ENCODE measurements at regions of chr17 and their contacts with region 1.

Region 1: GRCh38 chr17:1573916-1574696 is 11.5 kb upstream of the PITPNA start:
- DNase-seq: peak; percentile 84 to 95 (median 94)
- H3K4me3 ChIP-seq: no peak overlapping the region
- H3K27ac ChIP-seq: peak overlapping the region; percentile 54 to 76
- H3K4me1 ChIP-seq: peaks cover 19% of the 10 kb centered on the region
- H3K27me3 ChIP-seq: no peaks in the 10 kb centered on the region
- CTCF ChIP-seq: peak; percentile 92 to 99 (median 97)
- EP300 ChIP-seq: no peak
- POLR2A ChIP-seq: no peak

Region 2: GRCh38 chr17:1122533-1123392 is 451.3 kb before region 1 on chr17:
- intact Hi-C with region 1: no loop called
- DNase-seq: peak; percentile 84 to 93 (median 91)
- H3K4me3 ChIP-seq: no peak overlapping the region
- H3K27ac ChIP-seq: peak overlapping the region in 1 of 2 donors; percentile 47
- H3K4me1 ChIP-seq: peaks cover 9% of the 10 kb centered on the region
- H3K27me3 ChIP-seq: no peaks in the 10 kb centered on the region
- CTCF ChIP-seq: peak; percentile 92 to 94 (median 93)
- EP300 ChIP-seq: no peak
- POLR2A ChIP-seq: no peak

Region 3: DNA sequence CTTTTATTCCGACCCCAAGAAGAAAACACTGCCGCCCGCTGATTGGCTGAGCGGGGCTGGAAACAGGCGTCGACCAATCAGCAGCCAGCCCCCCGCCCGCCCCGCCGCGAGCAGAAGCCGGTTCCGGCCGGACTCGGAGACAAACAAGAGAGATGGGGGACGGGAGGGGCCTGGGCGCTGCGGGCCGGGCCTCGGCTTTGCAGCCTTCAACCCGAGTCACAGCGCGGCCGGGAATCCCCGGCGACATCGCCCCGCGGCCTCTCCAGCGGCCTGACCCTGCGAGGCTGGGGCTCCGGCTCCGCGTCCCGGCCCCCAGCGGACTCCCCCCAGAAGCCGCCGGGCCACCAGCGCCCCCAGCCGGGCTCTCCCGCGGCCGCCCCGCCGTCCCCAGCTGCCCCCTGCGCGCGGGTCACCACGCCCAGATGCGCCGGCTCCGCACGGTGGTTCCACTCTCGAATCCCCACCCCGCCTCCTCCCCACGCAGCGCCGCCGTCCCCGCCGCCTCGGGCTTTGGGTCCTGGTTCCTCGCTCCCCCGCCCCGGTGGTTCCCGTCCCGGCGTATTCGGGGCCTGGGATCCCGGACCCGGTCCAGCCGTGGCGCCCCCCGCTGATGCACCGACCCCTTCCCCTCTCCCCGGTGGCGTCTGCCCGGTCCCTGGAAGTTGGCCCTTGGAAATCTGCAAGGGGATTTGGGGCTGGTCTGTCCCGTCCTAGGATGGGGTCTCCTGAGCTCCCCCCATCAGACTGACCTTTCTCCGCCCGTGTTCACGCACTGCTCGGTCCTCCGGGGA is 54.9 kb after region 1 on chr17:
- intact Hi-C with region 1: loop called in 2 of 4 experiments (anchors 2 kb)
- DNase-seq: peak; percentile 91 to 95 (median 93)
- H3K4me3 ChIP-seq: peak overlapping the region; percentile 54
- H3K27ac ChIP-seq: peak overlapping the region; percentile 47 to 81
- H3K4me1 ChIP-seq: peaks cover 3% of the 10 kb centered on the region
- H3K27me3 ChIP-seq: no peaks in the 10 kb centered on the region
- CTCF ChIP-seq: peak; percentile 10 to 55 (median 54)
- EP300 ChIP-seq: no peak
- POLR2A ChIP-seq: peak; percentile 49

Region 4: DNA sequence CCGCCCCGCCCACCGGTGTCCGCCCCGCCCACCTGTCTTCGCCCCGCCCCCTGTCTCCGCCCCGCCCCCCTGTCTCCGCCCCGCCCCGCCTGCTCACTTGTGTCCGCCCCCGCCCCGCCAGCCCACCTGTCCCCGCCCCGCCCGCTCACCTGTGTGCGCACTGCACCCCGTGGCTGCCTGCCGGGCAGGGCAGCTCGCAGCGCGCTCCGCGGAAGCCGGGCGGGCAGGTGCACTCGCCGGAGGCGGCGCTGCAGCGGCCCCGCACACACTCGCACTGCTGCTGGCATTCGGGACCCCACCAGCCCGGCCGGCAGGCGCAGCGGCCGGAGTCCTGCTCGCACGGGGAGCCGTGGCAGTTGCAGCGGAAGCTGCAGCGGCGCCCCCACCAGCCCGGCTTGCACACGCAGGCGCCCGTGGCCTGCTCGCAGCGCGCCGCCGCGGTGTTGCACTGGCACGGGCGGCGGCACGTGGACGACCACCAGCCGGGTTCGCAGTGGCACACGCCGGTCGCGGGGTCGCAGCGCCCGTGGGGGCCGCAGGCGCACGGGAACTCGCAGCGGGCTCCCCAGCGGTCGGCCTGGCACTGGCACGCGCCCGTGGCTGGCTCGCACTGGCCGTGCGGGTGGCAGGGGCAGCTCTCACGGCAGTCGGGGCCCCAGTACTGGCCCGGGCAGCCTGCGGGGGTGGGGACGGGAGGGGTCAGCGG is 69.3 kb after region 1 on chr17:
- intact Hi-C with region 1: loop called (anchors 1 to 5 kb)
- DNase-seq: peak in 2 of 5 donors; percentile 56 to 68
- H3K4me3 ChIP-seq: peak overlapping the region; percentile 24
- H3K27ac ChIP-seq: no peak overlapping the region
- H3K4me1 ChIP-seq: peaks cover 5% of the 10 kb centered on the region
- H3K27me3 ChIP-seq: no peaks in the 10 kb centered on the region
- CTCF ChIP-seq: no peak
- EP300 ChIP-seq: no peak
- POLR2A ChIP-seq: no peak

Region 5: DNA sequence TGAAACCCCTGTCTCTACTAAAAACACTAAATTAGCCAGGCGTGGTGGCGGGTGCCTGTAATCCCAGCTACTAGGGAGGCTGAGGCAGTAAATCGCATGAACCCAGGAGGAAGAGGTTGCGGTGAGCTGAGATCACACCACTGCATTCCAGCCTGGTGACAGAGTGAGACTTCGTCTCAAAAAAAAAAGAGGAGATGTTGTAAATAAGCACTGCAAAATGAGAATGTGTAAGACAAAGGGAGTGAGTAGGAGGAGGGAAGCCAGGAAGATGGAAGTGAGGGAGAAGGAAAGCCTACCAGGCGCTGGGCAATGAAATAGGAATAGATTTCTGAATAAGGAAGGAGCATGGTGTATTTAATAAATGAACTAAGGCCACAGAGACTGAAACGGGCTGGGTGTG is 119.2 kb after region 1 on chr17:
- intact Hi-C with region 1: no loop called
- DNase-seq: no peak
- H3K4me3 ChIP-seq: no peak overlapping the region
- H3K27ac ChIP-seq: no peak overlapping the region
- H3K4me1 ChIP-seq: no peaks in the 10 kb centered on the region
- H3K27me3 ChIP-seq: no peaks in the 10 kb centered on the region
- CTCF ChIP-seq: no peak
- EP300 ChIP-seq: no peak
- POLR2A ChIP-seq: no peak

Measured in ovary (tissue), 10 donors.